ENCODE measurements at regions of chr2 and their contacts with region 1.

Region 1: DNA sequence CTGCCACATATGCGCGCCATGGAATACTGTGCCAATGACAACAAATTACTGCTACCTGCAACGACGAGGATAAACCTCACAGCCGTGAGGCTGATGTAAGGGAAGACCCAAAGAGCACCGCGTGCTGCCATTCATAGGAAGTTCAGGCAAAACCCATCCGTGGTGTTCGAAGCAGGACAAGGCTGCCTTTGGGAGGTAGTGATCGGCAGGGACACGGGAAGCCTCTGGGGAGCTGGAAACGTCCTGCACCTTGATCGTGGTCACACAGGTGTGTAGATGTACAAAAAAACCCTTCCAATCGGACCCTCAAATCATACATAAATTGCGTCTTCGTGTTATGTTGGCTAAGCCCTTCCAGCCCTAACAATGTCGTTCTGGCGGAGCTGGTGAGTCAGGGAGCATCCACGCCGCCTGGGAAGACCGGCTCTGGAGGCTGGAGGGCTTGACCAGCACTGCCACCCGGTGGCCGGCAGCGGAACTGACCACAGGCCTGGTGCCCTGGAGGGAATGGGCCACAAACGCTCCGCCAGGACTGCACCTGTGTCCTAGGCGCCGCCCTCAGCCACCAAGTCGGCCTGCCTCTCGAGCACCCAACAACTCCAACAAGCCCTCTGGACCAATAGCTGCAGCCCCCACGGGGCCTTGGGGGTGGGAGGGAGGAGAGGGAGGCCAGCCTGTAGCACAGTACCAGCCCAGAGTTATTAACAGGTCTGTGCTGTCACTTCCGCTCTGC is 4.1 kb upstream of the NEURL3 start:
- DNase-seq: peak; percentile 86
- CTCF ChIP-seq: peak; percentile 98

Region 2: DNA sequence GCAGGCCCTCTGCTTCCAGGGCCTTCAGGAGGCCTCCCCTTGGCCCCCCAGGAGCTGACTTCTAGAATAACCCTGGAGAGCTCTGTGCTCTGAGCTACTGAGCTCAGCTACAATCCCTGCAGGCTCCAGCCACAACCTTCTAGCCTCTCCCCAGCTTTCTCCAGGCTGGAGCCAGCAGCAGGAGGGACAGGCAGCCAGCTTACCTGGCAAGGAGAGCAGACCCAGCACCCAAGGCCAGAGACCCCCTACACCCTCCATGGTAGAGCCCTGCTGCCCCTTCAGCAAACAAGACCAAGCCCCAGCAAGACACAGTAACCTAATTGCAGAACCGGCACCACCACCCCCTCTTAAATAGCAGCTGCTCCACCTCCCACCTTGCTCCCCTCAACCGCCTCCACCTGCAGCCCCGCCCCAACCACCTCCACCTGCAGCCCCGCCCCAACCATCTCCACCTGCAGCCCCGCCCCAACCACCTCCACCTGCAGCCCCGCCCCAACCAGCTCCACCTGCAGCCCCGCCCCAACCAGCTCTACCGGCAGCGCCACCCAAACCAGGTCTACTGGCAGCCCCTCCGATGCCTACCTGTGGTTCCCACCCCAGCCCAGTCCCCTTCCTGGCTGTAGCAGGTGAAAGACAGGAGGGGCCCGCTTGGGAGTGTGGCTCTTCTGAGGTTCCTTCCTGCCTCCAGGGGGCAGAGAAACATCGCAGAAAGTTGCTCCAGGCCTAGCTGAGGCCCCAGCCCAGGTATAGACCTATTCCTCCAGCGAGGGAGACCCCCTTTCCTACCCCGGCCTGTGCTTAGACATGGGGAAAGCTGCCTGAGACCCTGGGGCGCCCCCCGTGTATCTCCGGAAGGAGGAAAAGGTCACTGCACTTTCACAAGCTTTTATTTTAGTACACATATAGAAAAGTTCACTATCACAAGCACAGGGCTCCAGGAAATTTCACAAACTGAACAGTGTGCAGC is 370.8 kb before region 1 on chr2 and contains the start of gene ASTL:
- CTCF ChIA-PET with region 1: interaction called, 32 read pairs
- POLR2A ChIA-PET with region 1: interaction called, 5 read pairs
- DNase-seq: peak; percentile 78
- CTCF ChIP-seq: peak; percentile 77

Region 3: GRCh38 chr2:96470109-96470508 is 39.2 kb before region 1 on chr2:
- CTCF ChIA-PET with region 1: interaction called, 14 read pairs
- POLR2A ChIA-PET with region 1: no interaction called
- DNase-seq: no peak
- CTCF ChIP-seq: no peak

Region 4: GRCh38 chr2:96485751-96486651 is 23.3 kb before region 1 on chr2:
- CTCF ChIA-PET with region 1: interaction called, 103 read pairs
- POLR2A ChIA-PET with region 1: interaction called, 3 read pairs
- DNase-seq: peak; percentile 89
- CTCF ChIP-seq: no peak

Region 5: DNA sequence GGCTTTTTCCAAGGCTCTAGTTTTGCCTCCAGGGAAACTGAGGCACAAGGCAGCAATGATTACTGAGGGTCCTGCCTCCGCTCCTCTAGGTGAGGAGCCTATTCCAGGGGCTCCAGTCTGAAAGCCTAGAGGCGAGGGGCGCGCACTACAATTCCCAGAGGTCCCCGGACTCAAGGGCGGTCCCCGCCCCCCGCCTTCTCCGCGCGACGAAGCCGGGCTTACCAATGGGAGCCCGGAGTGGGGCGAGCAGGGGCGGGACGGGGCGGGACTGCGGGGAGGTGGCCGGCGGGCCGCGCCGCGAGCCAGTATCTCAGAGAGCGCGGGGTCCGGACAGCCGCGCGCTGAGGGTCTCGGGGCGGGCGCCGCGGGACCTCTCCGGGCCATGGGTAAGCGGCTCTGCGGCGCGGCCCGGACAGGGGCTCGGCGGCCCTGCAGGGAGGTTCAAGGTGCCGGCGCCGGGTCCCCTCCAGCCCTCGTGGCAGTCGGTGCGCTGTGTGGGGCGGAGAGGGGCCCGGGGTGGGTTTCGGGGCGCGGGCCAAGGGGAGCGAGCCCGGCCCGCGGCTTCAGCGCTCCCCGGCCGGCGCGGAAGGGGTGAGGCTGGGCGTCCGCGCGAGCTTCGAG is 27.3 kb after region 1 on chr2 and contains the start of gene ARID5A:
- CTCF ChIA-PET with region 1: interaction called, 349 read pairs
- POLR2A ChIA-PET with region 1: interaction called, 4 read pairs
- DNase-seq: peak; percentile 93
- CTCF ChIP-seq: no peak

Measured in GM10248 (cell line).